Gastrocnemius medialis (tissue), 4 donors: ENCODE measurements at regions of chr3 and their contacts with region 1.

Region 1: DNA sequence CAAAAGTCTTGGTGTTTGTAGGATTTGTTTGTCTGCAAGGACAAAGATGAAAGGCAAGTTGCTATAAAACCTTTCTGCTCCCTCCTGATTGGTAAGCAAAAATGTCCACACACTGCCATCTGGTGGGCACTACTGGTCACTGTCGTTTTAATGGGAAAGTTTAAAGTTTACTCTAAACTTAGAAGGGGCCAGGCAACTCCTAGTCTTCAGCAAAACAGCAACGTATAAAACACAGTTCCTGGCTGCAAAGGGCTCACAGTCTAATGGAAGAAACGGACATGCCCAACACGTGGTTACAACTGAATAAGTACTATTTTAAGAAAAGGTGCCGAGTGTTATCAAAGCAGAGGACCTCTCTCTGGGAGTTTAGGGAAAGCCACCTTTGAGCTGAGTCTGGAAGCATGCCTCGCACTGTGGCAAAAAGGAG is 23.7 kb upstream of the TPRG1 start:
- DNase-seq: peak; percentile 25 to 49
- ATAC-seq: peak; percentile 64 to 76
- H3K4me3 ChIP-seq: no peak overlapping the region
- H3K27ac ChIP-seq: no peak overlapping the region
- H3K4me1 ChIP-seq: peaks cover 7 to 12% of the 10 kb centered on the region in 2 donors
- H3K27me3 ChIP-seq: no peaks in the 10 kb centered on the region
- CTCF ChIP-seq: peak; percentile 56 to 84 (median 80)
- POLR2A ChIP-seq: no peak

Region 2: GRCh38 chr3:187714404-187714979 is 1433.6 kb before region 1 on chr3:
- in situ Hi-C with region 1: loop called in 2 of 4 experiments (anchors 25 kb)
- intact Hi-C with region 1: no loop called
- DNase-seq: peak; percentile 60 to 80
- ATAC-seq: peak; percentile 70 to 82
- H3K4me3 ChIP-seq: no peak overlapping the region
- H3K27ac ChIP-seq: peak overlapping the region in 3 of 4 donors; percentile 43 to 67 (median 47)
- H3K4me1 ChIP-seq: peaks cover 17 to 24% of the 10 kb centered on the region in 2 donors
- H3K27me3 ChIP-seq: no peaks in the 10 kb centered on the region
- CTCF ChIP-seq: peak; percentile 94 to 96 (median 95)
- POLR2A ChIP-seq: no peak

Region 3: DNA sequence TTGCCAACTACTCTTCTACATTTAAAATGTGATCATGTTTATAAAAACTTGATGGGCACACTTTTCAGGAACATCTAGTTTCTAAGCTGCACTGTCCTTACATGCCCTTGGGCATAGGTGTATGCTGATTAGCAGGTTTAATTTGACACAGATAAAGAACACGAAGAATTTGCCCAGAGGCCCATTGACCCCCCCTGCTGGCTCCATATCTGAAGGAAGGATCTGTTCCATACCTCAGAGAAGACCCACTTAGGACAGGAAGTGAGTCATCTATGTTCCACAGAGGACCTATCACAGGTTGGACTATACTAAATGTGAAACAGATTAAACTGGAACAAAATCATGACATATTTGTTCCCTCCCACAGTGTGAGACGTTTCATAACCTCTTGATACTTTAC is 1087.0 kb before region 1 on chr3:
- in situ Hi-C with region 1: loop called in 1 of 4 experiments (anchors 25 kb)
- intact Hi-C with region 1: no loop called
- DNase-seq: no peak
- ATAC-seq: peak; percentile 56 to 72
- H3K4me3 ChIP-seq: no peak overlapping the region
- H3K27ac ChIP-seq: peak overlapping the region in 1 of 4 donors; percentile 25
- H3K4me1 ChIP-seq: peaks cover 6 to 16% of the 10 kb centered on the region in 2 donors
- H3K27me3 ChIP-seq: no peaks in the 10 kb centered on the region
- CTCF ChIP-seq: no peak
- POLR2A ChIP-seq: no peak

Region 4: GRCh38 chr3:188294823-188295487 is 853.1 kb before region 1 on chr3:
- in situ Hi-C with region 1: loop called in 1 of 4 experiments (anchors 25 kb)
- intact Hi-C with region 1: no loop called
- DNase-seq: peak; percentile 59 to 60
- ATAC-seq: peak; percentile 98
- H3K4me3 ChIP-seq: peak overlapping the region; percentile 16 to 28 (median 24)
- H3K27ac ChIP-seq: peak overlapping the region; percentile 84 to 89 (median 86)
- H3K4me1 ChIP-seq: peaks cover 44 to 47% of the 10 kb centered on the region in 2 donors
- H3K27me3 ChIP-seq: no peaks in the 10 kb centered on the region
- CTCF ChIP-seq: no peak
- POLR2A ChIP-seq: no peak

Region 5: GRCh38 chr3:188594139-188594538 is 554.0 kb before region 1 on chr3:
- in situ Hi-C with region 1: loop called in 1 of 4 experiments (anchors 10 kb)
- intact Hi-C with region 1: no loop called
- DNase-seq: no peak
- ATAC-seq: peak; percentile 30 to 34
- H3K4me3 ChIP-seq: no peak overlapping the region
- H3K27ac ChIP-seq: peak overlapping the region; percentile 27 to 78 (median 56)
- H3K4me1 ChIP-seq: peaks cover 47 to 55% of the 10 kb centered on the region in 2 donors
- H3K27me3 ChIP-seq: no peaks in the 10 kb centered on the region
- CTCF ChIP-seq: no peak
- POLR2A ChIP-seq: no peak

Region 6: DNA sequence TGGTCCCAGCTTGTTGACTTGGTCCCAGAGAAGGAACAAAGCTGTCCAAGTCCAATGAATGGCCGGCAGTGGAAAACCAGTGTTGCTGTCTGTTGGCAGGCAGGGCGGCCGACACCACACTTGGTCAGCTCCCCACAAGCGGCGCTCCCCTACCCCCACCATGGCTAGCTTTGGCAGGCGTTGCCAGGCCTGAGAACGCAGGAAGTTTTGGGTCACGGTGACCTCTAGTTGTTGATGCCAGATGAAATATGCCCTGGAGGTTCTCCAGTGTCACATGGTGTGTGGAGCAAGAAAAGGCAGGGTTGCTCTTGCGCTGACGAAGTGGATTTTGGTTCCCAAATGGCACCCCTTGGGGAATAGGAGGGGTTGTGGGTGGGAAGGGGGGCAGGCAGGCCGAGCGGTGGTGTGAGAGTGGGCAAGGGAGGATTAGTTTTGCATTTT is 49.0 kb before region 1 on chr3:
- in situ Hi-C with region 1: no loop called
- intact Hi-C with region 1: loop called (anchors 5 kb)
- DNase-seq: peak; percentile 74 to 89
- ATAC-seq: peak; percentile 76 to 93
- H3K4me3 ChIP-seq: peak overlapping the region in 3 of 4 donors; percentile 16 to 40 (median 38)
- H3K27ac ChIP-seq: peak overlapping the region; percentile 76 to 93 (median 82)
- H3K4me1 ChIP-seq: peaks cover 21% of the 10 kb centered on the region in 2 donors
- H3K27me3 ChIP-seq: no peaks in the 10 kb centered on the region
- CTCF ChIP-seq: no peak
- POLR2A ChIP-seq: no peak